ENCODE measurements at regions of chr5 and their contacts with region 1.

Region 1: DNA sequence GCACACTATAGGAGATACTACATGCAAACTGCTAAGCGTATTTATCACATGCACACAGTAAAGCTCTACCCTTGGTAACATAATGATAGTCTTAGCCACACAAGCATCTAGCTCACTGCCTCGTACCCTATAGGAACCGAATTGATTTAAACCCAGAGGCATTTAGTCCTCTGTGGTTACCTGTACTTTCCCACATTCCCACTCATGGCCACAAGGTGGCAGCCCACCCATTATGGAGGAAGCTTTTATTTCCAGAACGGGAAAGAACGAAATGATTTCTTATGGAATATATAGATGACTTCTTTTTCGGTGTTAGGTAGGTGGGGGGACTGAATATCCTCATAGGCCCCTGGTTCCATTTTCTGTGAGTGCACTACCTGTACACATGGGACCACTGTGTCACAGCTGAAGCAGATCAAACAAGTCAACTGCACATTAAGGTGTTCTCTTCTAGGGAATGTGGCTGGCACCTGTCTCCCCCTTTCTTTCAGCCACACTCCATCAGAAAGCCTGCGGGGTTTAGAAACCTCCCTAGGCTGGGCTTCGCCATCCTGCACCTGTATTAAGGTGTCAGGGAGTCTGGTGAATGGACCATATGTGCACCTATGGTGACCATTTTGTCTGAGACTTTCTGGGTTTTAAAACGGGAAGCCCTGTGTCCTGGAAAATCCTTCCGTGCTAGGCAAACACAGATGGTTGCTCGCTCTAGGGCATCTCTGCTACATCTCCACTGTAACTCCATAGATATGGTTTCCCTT is 313.2 kb downstream of the SLIT3 start:
- ATAC-seq: peak; percentile 42 to 77 (median 60)
- H3K4me3 ChIP-seq: no peak overlapping the region
- H3K27ac ChIP-seq: no peak overlapping the region
- H3K4me1 ChIP-seq: peaks cover 6 to 7% of the 10 kb centered on the region in 2 donors

Region 2: DNA sequence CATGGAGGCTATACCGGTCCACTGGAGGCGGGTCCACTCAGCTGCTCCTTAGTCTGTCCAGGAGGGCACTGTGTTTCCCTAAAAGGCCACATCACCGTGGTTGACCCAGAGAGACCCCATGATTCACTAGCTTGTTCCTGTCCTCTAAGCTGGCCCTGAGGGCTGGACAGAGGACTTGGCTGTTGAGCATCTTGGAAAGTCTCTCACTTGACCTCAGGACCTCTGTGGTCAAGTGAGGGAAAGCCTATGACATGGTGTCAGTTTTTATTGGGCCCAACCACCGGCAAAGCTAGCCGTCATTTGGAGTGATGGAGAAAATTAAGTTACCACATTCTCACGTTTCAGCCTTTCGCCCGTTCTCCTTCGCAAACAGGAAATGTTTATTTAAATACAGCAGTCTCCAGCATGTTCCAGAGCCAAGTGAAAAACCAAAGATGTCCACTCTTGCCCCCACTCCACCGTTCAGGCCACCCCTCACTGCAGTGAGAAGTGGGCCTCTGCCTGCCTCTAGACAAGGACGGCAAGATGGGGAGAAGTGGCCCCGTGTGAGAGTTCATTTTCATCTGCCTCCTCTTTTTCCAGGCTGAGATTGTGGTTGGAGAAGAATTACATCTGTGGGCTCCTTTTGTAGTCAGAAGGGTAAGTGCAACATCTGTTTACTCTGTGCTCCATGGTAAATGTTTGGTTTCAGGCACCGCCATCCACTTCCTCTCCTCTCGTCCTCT is 308.9 kb after region 1 on chr5:
- in situ Hi-C with region 1: loop called (anchors 10 to 25 kb)
- ATAC-seq: peak in 1 of 8 experiments; percentile 33
- H3K4me3 ChIP-seq: no peak overlapping the region
- H3K27ac ChIP-seq: no peak overlapping the region
- H3K4me1 ChIP-seq: peaks cover 4 to 6% of the 10 kb centered on the region in 2 donors

Region 3: DNA sequence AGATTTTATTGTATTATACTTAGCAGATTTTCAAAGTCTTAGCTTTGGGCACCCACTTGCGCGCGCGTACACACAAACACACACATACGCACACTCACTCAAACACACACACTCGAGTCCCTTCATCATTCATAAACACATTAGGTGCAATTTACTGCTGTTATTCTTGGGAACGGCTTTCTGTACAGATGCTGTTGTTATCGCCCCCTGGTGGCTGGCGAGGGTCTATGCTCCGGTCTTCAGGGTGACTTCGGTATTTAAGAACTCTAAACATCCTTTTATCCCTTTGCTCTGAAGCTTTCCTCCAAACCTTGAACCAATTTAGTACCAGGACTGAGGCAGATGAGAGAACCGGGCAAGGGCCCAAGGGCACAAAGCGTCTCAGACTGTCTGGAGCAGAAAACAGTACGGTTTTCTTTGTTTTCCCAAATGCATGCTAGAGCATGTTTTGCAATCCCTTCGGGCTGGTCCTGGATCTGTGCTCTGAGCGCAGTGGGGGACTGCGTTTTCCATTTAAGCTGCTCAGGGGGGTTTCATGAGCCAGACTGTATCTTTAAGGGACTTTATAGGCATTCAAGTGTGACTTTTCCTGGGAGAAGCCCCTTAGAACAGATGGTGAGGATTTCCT is 314.9 kb after region 1 on chr5:
- in situ Hi-C with region 1: loop called (anchors 10 to 25 kb)
- ATAC-seq: peak in 6 of 8 experiments; percentile 4 to 37 (median 24)
- H3K4me3 ChIP-seq: no peak overlapping the region
- H3K27ac ChIP-seq: no peak overlapping the region
- H3K4me1 ChIP-seq: peaks cover 6 to 11% of the 10 kb centered on the region in 2 donors

Region 4: DNA sequence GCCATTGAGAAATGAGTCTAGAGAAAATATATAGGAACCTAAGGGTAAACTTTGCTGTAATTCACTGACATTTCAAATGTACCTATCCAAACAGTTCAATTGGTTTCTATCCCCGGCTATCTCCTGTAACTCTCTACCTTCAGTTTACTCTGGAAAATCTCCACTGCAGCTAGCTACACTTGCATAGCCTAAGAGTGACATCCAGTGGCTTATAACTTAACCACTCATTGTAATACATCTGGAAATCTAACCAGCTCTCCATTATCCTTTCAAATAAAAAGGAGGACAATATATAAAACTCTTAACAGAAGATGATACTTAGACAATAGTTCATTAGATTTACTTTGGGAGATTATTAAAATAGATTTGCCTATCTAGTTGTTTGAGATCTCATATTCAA is 560.6 kb after region 1 on chr5:
- in situ Hi-C with region 1: loop called in 6 of 9 experiments (anchors 25 kb)
- ATAC-seq: peak in 4 of 8 experiments; percentile 49 to 86 (median 82)
- H3K4me3 ChIP-seq: no peak overlapping the region
- H3K27ac ChIP-seq: no peak overlapping the region
- H3K4me1 ChIP-seq: no peaks in the 10 kb centered on the region

Region 5: DNA sequence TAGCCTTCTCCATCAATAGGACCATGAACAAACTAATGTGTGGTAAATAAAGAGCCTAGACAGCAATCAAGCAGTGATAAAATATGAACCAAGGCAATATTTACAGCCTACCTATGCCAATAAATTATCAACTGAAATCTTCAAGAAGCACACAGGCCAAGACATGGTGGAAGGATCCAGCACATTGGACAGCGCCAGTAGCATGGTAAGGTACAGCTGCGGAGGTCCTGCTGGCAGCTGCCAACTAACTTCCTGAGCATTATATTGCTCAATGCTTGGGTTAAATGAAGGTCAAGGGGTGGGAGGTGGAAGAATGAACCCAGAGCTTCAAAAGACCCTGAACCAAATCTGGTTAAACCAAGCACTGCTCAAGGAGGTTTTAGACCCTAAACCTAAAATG is 579.4 kb after region 1 on chr5:
- in situ Hi-C with region 1: loop called in 3 of 9 experiments (anchors 25 kb)
- ATAC-seq: no peak
- H3K4me3 ChIP-seq: no peak overlapping the region
- H3K27ac ChIP-seq: no peak overlapping the region
- H3K4me1 ChIP-seq: peaks cover 0 to 2% of the 10 kb centered on the region in 2 donors

Measured in motor neuron (in vitro differentiated cells).